ENCODE measurements at regions of chr17 and their contacts with region 1.

Region 1: DNA sequence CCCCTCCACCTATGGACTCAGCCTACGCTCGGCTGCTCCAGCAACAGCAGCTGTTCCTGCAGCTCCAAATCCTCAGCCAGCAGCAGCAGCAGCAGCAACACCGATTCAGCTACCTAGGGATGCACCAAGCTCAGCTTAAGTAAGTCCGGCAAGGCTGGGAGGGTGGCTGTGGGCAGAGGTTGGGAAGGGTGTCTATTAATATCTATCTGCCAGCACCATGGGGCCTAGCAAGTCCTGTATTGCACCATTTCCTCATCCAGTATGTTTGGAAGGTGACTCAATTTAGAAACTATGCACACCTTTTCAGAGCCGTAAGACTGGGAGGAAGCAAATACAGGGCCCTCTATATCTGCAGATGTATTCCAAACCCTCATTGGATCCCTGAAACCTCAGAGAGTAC is 45.0 kb upstream of the ARHGAP44 start:
- DNase-seq: no peak
- H3K4me3 ChIP-seq: no peak overlapping the region
- H3K27ac ChIP-seq: peak overlapping the region; percentile 13
- H3K27me3 ChIP-seq: no peaks in the 10 kb centered on the region
- CTCF ChIP-seq: no peak

Region 2: GRCh38 chr17:12180644-12181261 is 563.5 kb before region 1 on chr17:
- CTCF ChIA-PET with region 1: interaction called, 33 read pairs
- POLR2A ChIA-PET with region 1: no interaction called
- DNase-seq: peak; percentile 53
- H3K4me3 ChIP-seq: no peak overlapping the region
- H3K27ac ChIP-seq: no peak overlapping the region
- H3K27me3 ChIP-seq: no peaks in the 10 kb centered on the region
- CTCF ChIP-seq: peak; percentile 72

Region 3: GRCh38 chr17:12545877-12546513 is 198.3 kb before region 1 on chr17:
- CTCF ChIA-PET with region 1: interaction called, 28 read pairs
- POLR2A ChIA-PET with region 1: no interaction called
- DNase-seq: no peak
- H3K4me3 ChIP-seq: no peak overlapping the region
- H3K27ac ChIP-seq: no peak overlapping the region
- H3K27me3 ChIP-seq: no peaks in the 10 kb centered on the region
- CTCF ChIP-seq: peak; percentile 87

Region 4: GRCh38 chr17:12673788-12674187 is 70.5 kb before region 1 on chr17:
- CTCF ChIA-PET with region 1: interaction called, 40 read pairs
- POLR2A ChIA-PET with region 1: no interaction called
- DNase-seq: no peak
- H3K4me3 ChIP-seq: no peak overlapping the region
- H3K27ac ChIP-seq: no peak overlapping the region
- H3K27me3 ChIP-seq: no peaks in the 10 kb centered on the region
- CTCF ChIP-seq: no peak

Region 5: GRCh38 chr17:12693640-12694039 is 50.7 kb before region 1 on chr17:
- CTCF ChIA-PET with region 1: interaction called, 10 read pairs
- POLR2A ChIA-PET with region 1: no interaction called
- DNase-seq: no peak
- H3K4me3 ChIP-seq: no peak overlapping the region
- H3K27ac ChIP-seq: no peak overlapping the region
- H3K27me3 ChIP-seq: no peaks in the 10 kb centered on the region
- CTCF ChIP-seq: no peak

Region 6: GRCh38 chr17:12730931-12731521 is 13.3 kb before region 1 on chr17:
- CTCF ChIA-PET with region 1: interaction called, 17 read pairs
- POLR2A ChIA-PET with region 1: interaction called, 9 read pairs
- DNase-seq: no peak
- H3K4me3 ChIP-seq: no peak overlapping the region
- H3K27ac ChIP-seq: peak overlapping the region; percentile 65
- H3K27me3 ChIP-seq: no peaks in the 10 kb centered on the region
- CTCF ChIP-seq: no peak

Region 7: GRCh38 chr17:12765548-12765947 is 21.2 kb after region 1 on chr17:
- CTCF ChIA-PET with region 1: interaction called, 18 read pairs
- POLR2A ChIA-PET with region 1: no interaction called
- DNase-seq: peak; percentile 78
- H3K4me3 ChIP-seq: no peak overlapping the region
- H3K27ac ChIP-seq: no peak overlapping the region
- H3K27me3 ChIP-seq: no peaks in the 10 kb centered on the region
- CTCF ChIP-seq: no peak

Measured in AG04450 (cell line).